ENCODE measurements at regions of chr3 and their contacts with region 1.

Region 1: DNA sequence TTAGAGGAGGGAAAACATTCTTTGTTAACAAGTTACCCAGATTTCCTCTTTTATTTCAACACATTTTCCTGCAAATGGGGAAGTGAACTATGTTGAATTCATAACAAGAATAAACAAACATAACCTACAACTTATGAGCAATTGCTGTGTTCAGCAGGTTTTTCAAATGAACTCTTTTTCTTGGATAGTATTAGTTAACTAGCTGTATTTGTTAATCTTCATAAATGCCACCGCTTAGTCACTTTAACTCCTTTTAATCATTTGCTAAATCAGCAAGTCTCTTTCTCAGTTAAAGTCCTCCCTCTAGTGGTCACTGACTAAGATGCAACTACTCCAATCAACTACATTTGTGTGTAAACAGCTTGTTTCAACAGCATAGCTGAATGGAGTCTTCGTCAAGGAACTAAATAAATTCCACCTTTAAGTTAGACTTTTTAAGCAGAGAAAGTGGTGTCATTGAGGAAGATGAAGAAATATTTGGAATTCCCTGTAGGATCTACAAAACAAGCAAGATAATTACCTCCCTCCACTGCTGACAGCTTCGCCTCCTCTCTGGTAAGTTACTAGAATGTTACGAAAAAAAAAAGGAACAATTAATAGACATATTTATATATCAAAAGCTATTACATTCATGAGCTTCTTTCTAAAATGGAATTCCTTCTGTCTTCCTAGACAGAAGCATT is 1122.0 kb downstream of the ROBO1 start:
- DNase-seq: peak; percentile 51
- H3K4me3 Mint-ChIP-seq: no peak overlapping the region
- H3K27ac Mint-ChIP-seq: no peak overlapping the region
- H3K4me1 Mint-ChIP-seq: peaks cover 12% of the 10 kb centered on the region
- H3K27me3 Mint-ChIP-seq: no peaks in the 10 kb centered on the region
- CTCF ChIP-seq: peak; percentile 62

Region 2: DNA sequence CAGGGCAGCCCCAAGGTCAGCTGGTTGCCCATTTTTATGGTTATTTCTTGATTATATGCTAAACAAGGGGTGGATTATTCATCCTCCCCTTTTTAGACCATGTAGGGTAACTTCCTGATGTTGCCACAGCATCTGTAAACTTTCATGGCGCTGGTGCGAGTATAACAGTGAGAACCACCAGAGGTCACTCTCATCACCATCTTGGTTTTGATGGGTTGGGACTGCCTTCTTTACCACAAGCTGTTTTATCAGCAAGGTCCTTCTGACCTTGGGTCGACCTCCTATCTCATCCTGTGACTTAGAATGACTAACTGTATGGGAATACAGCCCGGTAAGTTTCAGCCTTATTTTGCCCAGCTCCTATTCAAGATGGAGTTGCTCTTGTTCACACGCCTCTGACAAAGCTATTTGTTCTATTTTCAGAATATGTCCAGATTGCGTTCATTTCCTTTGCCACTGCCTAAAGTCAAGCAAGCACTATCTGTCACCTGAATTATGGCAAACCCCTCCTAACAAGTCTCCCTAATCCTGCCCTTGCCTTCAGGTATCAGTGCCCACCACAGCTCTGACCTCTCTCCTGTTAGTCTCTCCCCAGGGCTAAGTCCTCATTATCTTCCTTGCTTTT is 1297.4 kb before region 1 on chr3:
- CTCF ChIA-PET with region 1: no interaction called
- intact Hi-C with region 1: loop called (anchors 10 kb)
- DNase-seq: peak; percentile 24
- H3K4me3 Mint-ChIP-seq: no peak overlapping the region
- H3K27ac Mint-ChIP-seq: no peak overlapping the region
- H3K4me1 Mint-ChIP-seq: peaks cover 12% of the 10 kb centered on the region
- H3K27me3 Mint-ChIP-seq: no peaks in the 10 kb centered on the region
- CTCF ChIP-seq: peak; percentile 18

Region 3: GRCh38 chr3:78165876-78166275 is 479.9 kb before region 1 on chr3:
- CTCF ChIA-PET with region 1: no interaction called
- intact Hi-C with region 1: loop called (anchors 5 kb)
- DNase-seq: no peak
- H3K4me3 Mint-ChIP-seq: no peak overlapping the region
- H3K27ac Mint-ChIP-seq: no peak overlapping the region
- H3K4me1 Mint-ChIP-seq: no peaks in the 10 kb centered on the region
- H3K27me3 Mint-ChIP-seq: no peaks in the 10 kb centered on the region
- CTCF ChIP-seq: no peak

Region 4: DNA sequence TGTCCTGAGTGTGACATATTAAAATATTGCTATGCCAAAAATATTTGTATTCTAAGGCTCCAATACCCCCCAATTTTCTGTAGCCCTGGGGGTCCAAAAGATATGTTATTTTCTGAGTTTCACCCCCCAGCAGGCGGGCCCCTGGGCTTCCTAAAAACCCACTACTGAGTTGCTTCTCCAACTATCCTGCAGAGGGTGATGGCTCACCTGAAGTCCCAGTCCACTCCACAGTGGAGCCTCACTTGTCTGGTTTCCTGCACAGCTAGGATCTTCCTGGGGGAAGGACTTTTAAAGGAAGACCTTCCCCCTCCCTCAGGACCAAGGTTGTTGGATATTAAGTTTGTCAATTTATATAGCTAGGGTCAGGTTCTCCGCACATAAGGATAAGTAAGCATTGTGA is 424.5 kb before region 1 on chr3:
- CTCF ChIA-PET with region 1: interaction called, 12 read pairs
- intact Hi-C with region 1: loop called (anchors 1 kb)
- DNase-seq: peak; percentile 7
- H3K4me3 Mint-ChIP-seq: no peak overlapping the region
- H3K27ac Mint-ChIP-seq: no peak overlapping the region
- H3K4me1 Mint-ChIP-seq: peaks cover 7% of the 10 kb centered on the region
- H3K27me3 Mint-ChIP-seq: no peaks in the 10 kb centered on the region
- CTCF ChIP-seq: no peak

Region 5: GRCh38 chr3:78268716-78269668 is 376.8 kb before region 1 on chr3:
- CTCF ChIA-PET with region 1: no interaction called
- intact Hi-C with region 1: loop called (anchors 5 kb)
- DNase-seq: peak; percentile 80
- H3K4me3 Mint-ChIP-seq: peak overlapping the region; percentile 19
- H3K27ac Mint-ChIP-seq: peak overlapping the region; percentile 99
- H3K4me1 Mint-ChIP-seq: peaks cover 41% of the 10 kb centered on the region
- H3K27me3 Mint-ChIP-seq: no peaks in the 10 kb centered on the region
- CTCF ChIP-seq: no peak

Region 6: DNA sequence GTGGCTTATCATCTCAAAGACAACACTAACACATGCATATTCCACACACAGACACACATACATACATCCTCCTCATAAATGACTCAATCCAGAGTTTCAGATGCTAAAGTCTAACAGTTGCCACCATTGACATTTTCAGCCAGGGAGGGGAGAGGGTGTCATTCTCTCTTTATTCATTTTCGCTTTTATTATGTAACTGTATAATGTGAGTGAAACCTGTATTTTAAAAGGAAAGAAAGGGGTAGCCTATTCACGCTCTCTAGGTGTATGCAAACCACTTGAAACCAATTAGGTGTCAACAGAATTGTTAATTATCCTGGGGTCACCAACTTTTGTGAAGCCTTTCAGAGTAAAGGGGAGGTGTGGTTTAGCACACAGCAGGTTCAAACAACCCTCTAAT is 323.0 kb before region 1 on chr3:
- CTCF ChIA-PET with region 1: no interaction called
- intact Hi-C with region 1: no loop called
- DNase-seq: no peak
- H3K4me3 Mint-ChIP-seq: no peak overlapping the region
- H3K27ac Mint-ChIP-seq: no peak overlapping the region
- H3K4me1 Mint-ChIP-seq: no peaks in the 10 kb centered on the region
- H3K27me3 Mint-ChIP-seq: no peaks in the 10 kb centered on the region
- CTCF ChIP-seq: no peak

Region 7: GRCh38 chr3:78506581-78507195 is 139.1 kb before region 1 on chr3:
- CTCF ChIA-PET with region 1: no interaction called
- intact Hi-C with region 1: loop called (anchors 5 kb)
- DNase-seq: peak; percentile 35
- H3K4me3 Mint-ChIP-seq: peak overlapping the region; percentile 24
- H3K27ac Mint-ChIP-seq: peak overlapping the region; percentile 16
- H3K4me1 Mint-ChIP-seq: peaks cover 24% of the 10 kb centered on the region
- H3K27me3 Mint-ChIP-seq: no peaks in the 10 kb centered on the region
- CTCF ChIP-seq: no peak

Region 8: DNA sequence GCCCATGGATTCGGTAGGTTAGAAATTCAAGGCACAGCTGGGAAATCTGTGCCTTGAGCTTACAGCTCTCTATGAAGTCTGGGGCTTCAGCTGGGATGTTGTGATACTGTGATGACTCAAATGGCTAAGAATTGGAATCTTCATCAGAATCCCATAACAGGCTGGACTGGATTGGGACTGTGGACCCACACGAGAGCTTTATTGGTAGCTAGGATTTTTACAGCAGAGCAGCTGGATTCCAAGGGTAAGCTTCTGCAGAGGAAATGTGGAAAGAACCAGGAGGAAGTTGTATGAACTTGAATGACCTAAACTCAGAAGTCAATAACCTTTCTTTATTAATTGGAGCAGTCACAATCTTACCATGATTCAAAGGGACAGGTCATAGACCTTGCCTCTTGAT is 65.1 kb before region 1 on chr3:
- CTCF ChIA-PET with region 1: no interaction called
- intact Hi-C with region 1: no loop called
- DNase-seq: no peak
- H3K4me3 Mint-ChIP-seq: no peak overlapping the region
- H3K27ac Mint-ChIP-seq: no peak overlapping the region
- H3K4me1 Mint-ChIP-seq: no peaks in the 10 kb centered on the region
- H3K27me3 Mint-ChIP-seq: no peaks in the 10 kb centered on the region
- CTCF ChIP-seq: no peak

Measured in Calu3 (cell line).